Adrenal gland (tissue), 19 donors: ENCODE measurements at regions of chr3 and their contacts with region 1.

Region 1: DNA sequence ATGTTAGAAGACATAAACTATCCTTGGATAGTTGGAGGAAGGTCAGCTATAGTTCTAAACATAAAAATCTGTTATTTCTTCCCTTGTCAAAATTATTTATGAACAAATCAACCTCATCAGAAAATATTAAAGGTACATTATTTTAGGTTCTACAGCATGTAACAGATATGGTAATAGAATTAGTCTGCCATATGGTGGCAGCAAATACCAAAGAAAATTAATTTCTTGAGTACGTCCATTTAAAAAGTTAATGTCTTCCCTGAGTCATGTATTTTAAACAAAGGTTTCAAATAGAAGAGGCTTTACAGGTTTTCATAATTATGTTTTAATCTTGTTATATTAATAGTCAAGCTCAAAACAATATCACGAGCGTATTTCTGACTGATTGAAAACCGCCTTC is 17.9 kb upstream of the ANKRD28 start:
- DNase-seq: no peak
- H3K4me3 ChIP-seq: no peak overlapping the region
- H3K27ac ChIP-seq: no peak overlapping the region
- H3K4me1 ChIP-seq: peaks cover 0 to 13% of the 10 kb centered on the region in 2 donors
- H3K27me3 ChIP-seq: no peaks in the 10 kb centered on the region
- CTCF ChIP-seq: peak; percentile 18 to 63 (median 54)
- POLR2A ChIP-seq: no peak

Region 2: GRCh38 chr3:15667484-15667883 is 148.2 kb before region 1 on chr3:
- intact Hi-C with region 1: no loop called
- DNase-seq: no peak
- H3K4me3 ChIP-seq: no peak overlapping the region
- H3K27ac ChIP-seq: no peak overlapping the region
- H3K4me1 ChIP-seq: no peaks in the 10 kb centered on the region
- H3K27me3 ChIP-seq: no peaks in the 10 kb centered on the region
- CTCF ChIP-seq: no peak
- POLR2A ChIP-seq: no peak

Region 3: DNA sequence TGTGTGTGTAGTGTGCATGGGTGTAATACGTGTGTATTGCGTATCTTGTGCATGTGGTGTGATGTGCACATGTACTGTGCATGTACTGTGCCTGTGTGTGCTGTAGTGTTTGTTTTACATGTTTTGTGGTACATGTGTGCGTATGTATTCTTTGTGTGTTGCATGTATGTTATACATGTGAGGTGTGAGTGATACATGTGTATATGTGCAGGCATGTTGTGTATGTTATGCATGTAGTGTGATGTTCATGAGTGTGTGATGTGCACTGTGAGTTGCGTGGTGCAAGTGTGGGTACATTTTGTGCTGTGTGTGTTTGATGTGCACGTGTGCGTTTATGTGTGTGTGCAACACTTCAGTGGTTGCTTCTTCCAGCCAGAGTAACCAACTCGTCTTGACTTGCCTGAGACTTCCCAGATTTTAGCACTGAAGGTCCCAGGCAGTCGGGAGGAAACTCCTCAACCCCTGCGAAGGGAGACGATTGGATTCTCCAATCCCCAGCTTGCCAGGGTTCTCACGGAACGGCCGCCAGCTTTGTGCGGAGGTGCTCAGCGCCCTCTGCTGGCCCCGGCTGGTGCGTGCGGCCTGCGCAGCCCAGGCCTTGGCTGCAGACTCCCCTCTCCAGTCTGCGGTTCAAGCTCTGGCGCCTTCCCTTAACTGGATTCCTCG is 362.4 kb after region 1 on chr3:
- intact Hi-C with region 1: loop called in 1 of 2 experiments (anchors 10 kb)
- DNase-seq: peak; percentile 68 to 90 (median 84)
- H3K4me3 ChIP-seq: peak overlapping the region in 1 of 4 donors; percentile 35
- H3K27ac ChIP-seq: no peak overlapping the region
- H3K4me1 ChIP-seq: peaks cover 0 to 13% of the 10 kb centered on the region in 2 donors
- H3K27me3 ChIP-seq: no peaks in the 10 kb centered on the region
- CTCF ChIP-seq: peak; percentile 93 to 98 (median 94)
- POLR2A ChIP-seq: no peak

Region 4: DNA sequence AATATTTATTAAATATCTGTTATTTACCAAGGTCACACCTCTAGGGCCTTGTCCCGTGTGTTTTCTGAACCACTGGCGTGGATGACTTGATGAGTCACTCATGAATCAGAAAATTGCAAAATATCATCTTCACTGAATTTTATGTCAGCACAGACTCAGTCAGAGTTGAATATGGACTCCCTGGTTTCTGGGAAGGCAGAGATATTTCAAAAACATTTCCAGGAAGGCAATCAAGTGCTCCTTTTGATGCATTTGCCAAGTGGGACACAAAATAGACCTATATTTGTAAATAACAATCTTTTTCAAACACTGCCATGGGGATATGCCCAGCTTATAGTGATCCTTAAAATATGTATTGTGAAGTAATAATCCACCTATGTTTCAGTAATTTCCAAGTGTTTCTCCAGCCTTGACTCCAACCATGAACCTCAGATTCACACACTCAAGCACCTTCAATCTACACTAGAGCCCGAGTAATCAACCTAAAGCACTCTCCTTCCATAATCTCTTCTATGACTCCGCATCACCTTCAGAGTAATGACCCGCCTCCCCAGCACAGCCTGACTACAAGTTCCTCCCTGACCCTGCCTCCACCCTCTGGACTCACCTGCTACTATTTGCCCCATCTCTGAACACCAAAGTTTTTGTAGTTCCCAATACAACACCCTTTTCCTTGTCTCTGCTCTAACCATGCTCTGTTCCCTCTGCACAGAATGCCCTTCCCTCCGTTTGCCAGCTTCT is 424.8 kb after region 1 on chr3:
- intact Hi-C with region 1: loop called (anchors 5 kb)
- DNase-seq: peak in 6 of 7 donors; percentile 48 to 67 (median 60)
- H3K4me3 ChIP-seq: no peak overlapping the region
- H3K27ac ChIP-seq: peak overlapping the region; percentile 1 to 77 (median 52)
- H3K4me1 ChIP-seq: peaks cover 0 to 31% of the 10 kb centered on the region in 2 donors
- H3K27me3 ChIP-seq: no peaks in the 10 kb centered on the region
- CTCF ChIP-seq: no peak
- POLR2A ChIP-seq: no peak